ENCODE measurements at regions of chr4 and their contacts with region 1.

Region 1: DNA sequence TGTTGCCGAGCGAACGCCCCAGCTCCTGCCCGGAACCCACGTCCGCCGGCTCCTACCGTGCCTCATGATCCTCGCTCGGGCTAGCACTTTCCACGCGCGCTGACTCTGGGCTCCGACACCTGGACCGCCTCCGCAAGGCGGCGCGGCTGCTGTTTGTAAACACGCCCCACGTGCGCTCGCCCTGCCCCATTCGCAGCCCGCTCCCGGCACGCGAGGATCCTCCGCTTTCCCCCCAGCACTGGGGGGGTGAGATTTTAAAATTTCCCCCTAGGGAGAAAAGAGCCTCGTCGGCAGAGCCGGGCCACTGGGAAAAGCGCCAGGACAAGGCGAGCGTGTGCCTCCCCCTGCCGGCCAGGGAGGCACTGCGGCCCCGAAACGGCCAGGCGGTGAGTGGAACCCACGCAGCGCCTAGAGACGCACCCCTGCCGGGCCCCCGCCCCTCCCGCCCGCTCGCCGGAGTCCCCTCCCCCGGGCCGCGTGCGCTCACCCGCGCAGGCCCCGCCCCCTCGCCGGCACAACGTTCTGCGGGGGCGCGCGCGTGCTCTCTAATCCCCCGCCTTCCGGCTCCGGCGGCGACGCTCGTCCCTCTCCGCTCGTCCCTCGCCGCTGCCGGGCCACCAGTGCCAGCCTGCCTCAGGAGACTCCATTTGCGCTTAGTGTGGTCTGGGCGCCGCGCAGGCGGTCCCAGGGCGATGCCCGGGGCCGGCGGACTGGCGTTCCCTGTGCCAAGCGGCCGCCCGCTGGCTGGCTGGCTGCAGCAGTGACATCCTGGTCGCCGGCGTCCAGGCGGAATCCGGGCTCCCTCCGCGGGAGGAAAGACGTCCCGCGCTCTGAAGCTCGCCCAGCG is at the start of gene TIGD2:
- DNase-seq: peak; percentile 54 to 94 (median 87)

Region 2: GRCh38 chr4:88591787-88592599 is 519.2 kb before region 1 on chr4 and contains the start of gene HERC3:
- intact Hi-C with region 1: loop called (anchors 10 kb)
- DNase-seq: peak; percentile 79 to 97 (median 94)